ENCODE measurements at regions of chr17 and their contacts with region 1.

Region 1: DNA sequence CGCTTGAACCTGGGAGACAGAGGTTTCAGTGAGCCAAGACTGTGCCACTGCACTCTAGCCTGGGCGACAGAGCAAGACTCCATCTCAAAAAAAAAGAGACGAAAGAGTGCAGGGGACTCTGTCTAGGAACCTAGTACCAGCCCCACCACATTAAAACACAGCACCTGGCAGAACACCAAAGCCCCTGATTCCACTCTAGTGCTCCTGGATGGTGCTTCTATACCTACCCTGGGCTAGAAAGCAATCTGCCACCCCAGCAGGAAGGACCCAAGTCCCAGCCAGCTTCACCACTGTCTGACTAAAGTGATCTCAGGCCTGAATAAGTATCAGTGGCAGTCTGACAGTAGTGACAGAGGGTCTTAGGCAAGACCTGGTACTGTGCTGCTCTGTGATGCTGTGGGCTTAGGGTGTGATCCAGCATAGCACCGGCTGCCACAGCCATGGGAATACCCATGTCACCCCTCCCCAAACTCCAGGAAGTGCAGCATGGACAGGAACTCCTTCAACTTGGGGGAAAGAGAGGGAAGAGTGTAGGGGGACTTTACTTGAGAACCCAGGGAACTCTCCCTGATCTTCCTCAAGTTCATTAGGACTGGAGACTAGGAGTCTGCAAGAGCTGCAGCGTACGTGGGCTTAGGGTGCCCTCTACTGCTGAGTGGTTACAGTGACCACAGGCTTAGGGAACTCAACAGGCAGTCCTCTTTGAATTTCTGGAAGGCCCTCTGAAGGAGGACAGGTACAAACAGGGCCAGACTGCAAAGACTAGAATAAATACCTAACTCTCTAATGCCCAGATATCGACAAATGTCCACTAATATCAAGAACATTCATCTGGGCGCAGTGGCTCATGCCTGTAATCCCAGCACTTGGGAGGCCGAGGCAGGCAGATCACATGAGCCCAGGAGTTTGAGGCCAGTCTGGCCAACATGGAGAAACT is 30.0 kb upstream of the RNF43 start:
- DNase-seq: peak; percentile 24
- H3K4me3 ChIP-seq: no peak overlapping the region
- CTCF ChIP-seq: peak; percentile 82

Region 2: GRCh38 chr17:58200017-58200633 is 247.2 kb before region 1 on chr17:
- CTCF ChIA-PET with region 1: interaction called, 16 read pairs
- POLR2A ChIA-PET with region 1: no interaction called
- DNase-seq: no peak
- H3K4me3 ChIP-seq: no peak overlapping the region
- CTCF ChIP-seq: peak; percentile 71

Region 3: DNA sequence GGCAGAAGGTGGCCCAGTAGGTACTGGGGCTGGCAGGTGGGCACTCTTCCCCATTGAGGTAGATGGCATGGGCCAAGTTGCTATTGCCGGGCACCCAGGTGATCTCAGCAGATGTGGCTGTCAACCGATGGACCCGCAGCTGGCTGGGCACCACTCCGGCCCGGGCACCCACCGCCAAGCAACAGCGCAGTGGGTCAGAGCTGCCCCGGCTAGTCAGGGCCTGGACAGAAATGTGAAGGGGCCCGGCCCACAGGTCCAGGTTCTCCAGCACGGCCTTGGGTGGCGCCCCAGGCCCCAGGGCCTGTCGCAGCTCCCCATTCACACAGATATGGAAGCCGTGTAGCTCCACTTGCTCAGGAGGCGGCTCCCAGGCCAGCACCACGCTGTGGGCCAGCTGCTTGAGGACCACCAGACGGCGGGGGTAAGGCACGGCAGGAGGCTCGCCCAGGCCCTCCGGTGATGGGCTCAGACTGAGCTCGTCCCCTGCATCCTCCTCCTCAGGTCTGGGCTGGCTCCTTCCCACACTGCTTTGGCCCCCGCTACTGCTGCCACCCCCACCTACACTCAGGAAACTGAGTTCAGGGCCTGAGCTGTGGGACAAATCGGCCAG is 135.2 kb before region 1 on chr17:
- CTCF ChIA-PET with region 1: interaction called, 138 read pairs
- POLR2A ChIA-PET with region 1: no interaction called
- DNase-seq: no peak
- H3K4me3 ChIP-seq: no peak overlapping the region
- CTCF ChIP-seq: no peak

Region 4: GRCh38 chr17:58391302-58391984 is 55.9 kb before region 1 on chr17:
- CTCF ChIA-PET with region 1: no interaction called
- POLR2A ChIA-PET with region 1: no interaction called
- DNase-seq: no peak
- H3K4me3 ChIP-seq: no peak overlapping the region
- CTCF ChIP-seq: no peak

Region 5: GRCh38 chr17:58402047-58402446 is 45.3 kb before region 1 on chr17:
- CTCF ChIA-PET with region 1: no interaction called
- POLR2A ChIA-PET with region 1: no interaction called
- DNase-seq: no peak
- H3K4me3 ChIP-seq: no peak overlapping the region
- CTCF ChIP-seq: no peak